ENCODE measurements at regions of chr2 and their contacts with region 1.

Region 1: DNA sequence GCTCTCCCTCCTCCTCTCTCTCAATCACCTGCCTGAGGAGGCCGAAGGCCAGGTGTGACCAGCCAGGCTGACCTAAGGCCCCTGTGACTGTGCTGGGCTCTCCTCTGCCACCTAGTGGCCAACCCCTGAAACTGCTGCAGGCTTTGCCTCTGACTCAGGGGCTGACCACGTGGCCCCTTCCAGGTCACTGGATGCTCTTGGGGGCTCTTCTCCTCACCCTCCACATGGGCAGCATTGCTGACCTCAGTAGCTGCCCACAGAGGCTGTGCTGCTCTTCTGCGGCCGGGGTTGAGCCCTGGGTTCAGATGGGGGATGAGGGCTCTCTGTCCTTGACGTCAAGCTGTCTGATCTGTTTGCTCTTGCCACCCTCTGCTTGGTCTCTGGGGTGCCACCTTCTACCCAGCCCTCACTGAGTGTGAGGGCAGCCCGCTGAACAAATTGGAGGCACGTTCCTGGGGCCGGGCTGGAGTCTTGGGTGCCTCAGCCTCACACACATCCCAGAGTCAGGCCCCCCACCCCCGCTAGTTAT is 122.7 kb downstream of the TWIST2 start:
- DNase-seq: peak; percentile 51
- H3K4me3 ChIP-seq: no peak overlapping the region
- H3K27ac ChIP-seq: no peak overlapping the region
- H3K4me1 ChIP-seq: peaks cover 0 to 8% (median 3%) of the 10 kb centered on the region in 4 donors
- H3K27me3 ChIP-seq: no peaks in the 10 kb centered on the region
- CTCF ChIP-seq: peak; percentile 85 to 99 (median 98)
- EP300 ChIP-seq: no peak
- POLR2A ChIP-seq: no peak

Region 2: DNA sequence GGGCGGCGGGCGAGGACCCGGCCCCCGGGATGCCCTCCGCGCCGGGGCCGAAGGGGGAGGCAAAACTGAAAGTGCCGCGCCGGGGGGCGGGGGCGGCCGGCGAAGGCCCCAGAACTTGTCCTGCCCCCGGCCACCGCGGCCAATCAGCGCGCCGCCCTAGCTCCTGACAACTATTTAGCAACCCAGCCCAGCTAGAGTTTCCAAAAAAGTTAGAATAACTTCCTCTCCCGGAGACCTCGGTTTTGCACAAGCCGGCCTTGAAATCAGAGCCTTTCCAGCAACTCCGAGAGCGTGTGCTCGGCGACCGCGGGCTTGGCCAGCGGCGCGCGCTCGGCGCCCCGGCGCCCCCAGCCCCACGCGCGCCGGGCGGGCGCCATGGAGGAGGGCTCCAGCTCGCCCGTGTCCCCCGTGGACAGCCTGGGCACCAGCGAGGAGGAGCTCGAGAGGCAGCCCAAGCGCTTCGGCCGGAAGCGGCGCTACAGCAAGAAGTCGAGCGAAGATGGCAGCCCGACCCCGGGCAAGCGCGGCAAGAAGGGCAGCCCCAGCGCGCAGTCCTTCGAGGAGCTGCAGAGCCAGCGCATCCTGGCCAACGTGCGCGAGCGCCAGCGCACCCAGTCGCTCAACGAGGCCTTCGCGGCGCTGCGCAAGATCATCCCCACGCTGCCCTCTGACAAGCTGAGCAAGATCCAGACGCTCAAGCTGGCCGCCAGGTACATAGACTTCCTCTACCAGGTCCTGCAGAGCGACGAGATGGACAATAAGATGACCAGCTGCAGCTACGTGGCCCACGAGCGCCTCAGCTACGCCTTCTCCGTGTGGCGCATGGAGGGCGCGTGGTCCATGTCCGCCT is 122.6 kb before region 1 on chr2 and contains the start of gene TWIST2:
- in situ Hi-C with region 1: no loop called
- intact Hi-C with region 1: loop called (anchors 10 kb)
- DNase-seq: peak; percentile 58
- H3K4me3 ChIP-seq: peak within 1 kb of the TSS; percentile 48 to 60 (median 52)
- H3K27ac ChIP-seq: peak within 1 kb of the TSS; percentile 81 to 89 (median 85)
- H3K4me1 ChIP-seq: peaks cover 0 to 20% (median 0%) of the 10 kb centered on the region in 4 donors
- H3K27me3 ChIP-seq: peaks cover 85% of the 10 kb centered on the region
- CTCF ChIP-seq: no peak
- EP300 ChIP-seq: no peak
- POLR2A ChIP-seq: no peak
- total RNA-seq, gene TWIST2: 6.7 to 59.1 (median 16.8) TPM

Region 3: DNA sequence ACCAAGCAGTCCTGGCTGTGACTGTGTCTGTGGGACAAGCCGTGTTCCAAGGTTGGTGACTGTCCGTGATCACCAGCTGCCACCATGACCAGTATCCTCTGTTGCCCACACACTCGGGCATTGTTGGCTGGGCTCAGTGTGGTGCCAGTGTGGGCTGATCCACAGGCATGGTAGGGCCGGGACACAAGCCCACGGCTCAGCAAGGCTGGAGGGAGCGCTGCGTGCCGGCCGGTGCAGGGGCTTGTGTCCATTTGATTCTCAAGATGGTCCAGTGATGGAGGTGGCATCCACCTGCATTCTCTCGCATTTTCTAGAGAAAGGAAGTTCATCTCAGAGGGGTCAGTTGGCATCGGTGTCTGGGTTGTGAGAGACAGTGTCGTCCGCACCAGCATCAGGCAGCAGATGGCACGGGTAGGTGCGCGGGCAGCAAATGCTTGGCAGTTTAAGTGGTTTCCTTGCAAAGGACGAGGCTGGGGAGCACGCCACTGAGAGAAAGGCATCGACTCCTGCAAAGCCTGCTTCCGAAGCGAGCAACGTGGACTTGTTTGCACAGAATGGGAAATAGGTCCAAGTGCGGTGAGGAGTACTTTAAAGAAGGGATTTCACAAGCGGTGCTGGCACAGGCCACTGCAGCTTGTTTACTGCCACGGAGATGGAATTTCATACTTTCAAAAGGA is 101.9 kb before region 1 on chr2:
- in situ Hi-C with region 1: no loop called
- intact Hi-C with region 1: no loop called
- DNase-seq: peak; percentile 59
- H3K4me3 ChIP-seq: no peak overlapping the region
- H3K27ac ChIP-seq: peak overlapping the region; percentile 15 to 87 (median 59)
- H3K4me1 ChIP-seq: peaks cover 25 to 46% (median 37%) of the 10 kb centered on the region in 4 donors
- H3K27me3 ChIP-seq: no peaks in the 10 kb centered on the region
- CTCF ChIP-seq: no peak
- EP300 ChIP-seq: no peak
- POLR2A ChIP-seq: no peak

Region 4: GRCh38 chr2:238938401-238939055 is 32.1 kb before region 1 on chr2:
- in situ Hi-C with region 1: no loop called
- intact Hi-C with region 1: no loop called
- DNase-seq: peak; percentile 59
- H3K4me3 ChIP-seq: no peak overlapping the region
- H3K27ac ChIP-seq: peak overlapping the region; percentile 16 to 70 (median 36)
- H3K4me1 ChIP-seq: no peaks in the 10 kb centered on the region
- H3K27me3 ChIP-seq: no peaks in the 10 kb centered on the region
- CTCF ChIP-seq: no peak
- EP300 ChIP-seq: no peak
- POLR2A ChIP-seq: no peak

Measured in transverse colon (tissue), 4 donors.